ENCODE measurements at regions of chr9 and their contacts with region 1.

Region 1: DNA sequence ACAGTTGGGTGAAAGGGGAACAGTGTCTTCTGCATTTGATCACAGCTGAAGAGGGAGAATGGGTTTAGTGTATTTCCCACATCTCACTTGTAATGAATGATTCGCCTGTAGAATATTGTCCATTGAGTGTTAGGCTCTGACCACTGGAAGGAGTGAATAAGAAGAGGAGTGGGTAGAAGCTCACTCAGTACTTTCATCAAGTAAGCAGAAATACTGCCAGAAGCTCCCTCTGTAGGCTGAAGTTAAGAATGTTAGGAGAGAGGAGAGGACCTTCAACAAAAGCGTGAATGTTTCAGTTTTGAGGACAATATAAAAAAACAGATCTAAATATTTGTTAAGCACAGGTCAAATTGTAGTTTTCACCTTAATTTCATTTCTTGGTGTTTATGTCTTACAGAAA is 27.5 kb downstream of the FSD1L start:
- DNase-seq: no peak
- H3K4me3 ChIP-seq: no peak overlapping the region
- H3K27ac ChIP-seq: no peak overlapping the region
- H3K4me1 ChIP-seq: no peaks in the 10 kb centered on the region
- H3K27me3 ChIP-seq: no peaks in the 10 kb centered on the region
- CTCF ChIP-seq: peak in 1 of 3 experiments; percentile 30

Region 2: DNA sequence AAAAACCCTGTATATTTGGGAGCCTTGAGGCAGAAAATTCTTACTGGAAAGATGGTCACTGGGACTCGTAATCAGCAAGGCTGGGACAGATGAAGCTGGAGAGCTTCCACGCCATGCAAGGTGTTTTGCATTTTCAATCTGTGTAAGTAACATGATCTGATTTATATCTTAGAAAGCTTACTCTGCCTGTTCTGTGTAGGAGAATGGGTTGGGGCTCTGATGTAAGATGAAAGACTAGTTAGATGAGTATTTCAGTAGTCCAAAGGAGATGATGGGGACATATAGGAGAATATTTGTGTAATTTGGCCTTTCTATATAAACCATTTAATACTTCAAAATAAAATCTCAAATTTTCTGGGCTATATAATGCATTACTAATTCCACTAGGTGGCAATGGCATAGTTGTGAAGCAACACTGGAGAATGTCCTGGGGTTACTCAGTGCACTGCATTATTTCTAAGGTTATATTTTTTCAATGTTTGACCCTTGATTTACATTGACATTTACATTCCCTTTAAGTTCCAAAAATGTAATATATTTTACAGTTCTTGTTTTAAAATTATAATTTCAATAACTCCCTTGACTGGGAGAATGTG is 49.4 kb before region 1 on chr9:
- intact Hi-C with region 1: loop called (anchors 5 kb)
- DNase-seq: no peak
- H3K4me3 ChIP-seq: no peak overlapping the region
- H3K27ac ChIP-seq: no peak overlapping the region
- H3K4me1 ChIP-seq: no peaks in the 10 kb centered on the region
- H3K27me3 ChIP-seq: no peaks in the 10 kb centered on the region
- CTCF ChIP-seq: peak in 2 of 3 experiments; percentile 15 to 42

Region 3: DNA sequence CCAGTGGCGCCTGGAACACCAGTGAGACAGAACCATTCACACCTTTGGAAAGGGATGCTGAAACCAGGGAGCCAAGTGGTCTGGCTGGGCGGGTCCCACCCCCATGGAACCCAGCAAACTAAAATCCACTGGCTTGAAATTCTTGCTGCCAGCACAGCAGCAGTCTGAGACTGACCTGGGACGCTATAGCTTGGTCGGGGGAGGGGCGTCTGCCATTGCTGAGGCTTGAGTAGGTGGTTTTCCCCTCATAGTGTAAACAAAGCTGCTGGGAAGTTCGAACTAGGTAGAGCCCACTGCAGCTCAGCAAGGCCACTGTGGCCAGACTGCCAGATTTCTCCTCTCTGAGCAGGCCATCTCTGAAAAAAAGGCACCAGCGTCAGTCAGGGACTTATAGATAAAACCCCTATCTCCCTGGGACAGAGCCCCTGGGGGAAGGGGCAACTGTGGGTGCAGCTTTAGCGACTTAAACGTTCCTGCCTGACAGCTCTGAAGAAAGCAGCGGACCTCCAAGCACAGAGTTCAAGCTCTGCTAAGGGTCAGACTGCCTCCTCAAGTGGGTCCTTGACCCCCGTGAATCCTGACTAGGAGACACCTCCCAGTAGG is 40.6 kb after region 1 on chr9:
- intact Hi-C with region 1: no loop called
- DNase-seq: no peak
- H3K4me3 ChIP-seq: no peak overlapping the region
- H3K27ac ChIP-seq: no peak overlapping the region
- H3K4me1 ChIP-seq: no peaks in the 10 kb centered on the region
- H3K27me3 ChIP-seq: no peaks in the 10 kb centered on the region
- CTCF ChIP-seq: no peak

Region 4: DNA sequence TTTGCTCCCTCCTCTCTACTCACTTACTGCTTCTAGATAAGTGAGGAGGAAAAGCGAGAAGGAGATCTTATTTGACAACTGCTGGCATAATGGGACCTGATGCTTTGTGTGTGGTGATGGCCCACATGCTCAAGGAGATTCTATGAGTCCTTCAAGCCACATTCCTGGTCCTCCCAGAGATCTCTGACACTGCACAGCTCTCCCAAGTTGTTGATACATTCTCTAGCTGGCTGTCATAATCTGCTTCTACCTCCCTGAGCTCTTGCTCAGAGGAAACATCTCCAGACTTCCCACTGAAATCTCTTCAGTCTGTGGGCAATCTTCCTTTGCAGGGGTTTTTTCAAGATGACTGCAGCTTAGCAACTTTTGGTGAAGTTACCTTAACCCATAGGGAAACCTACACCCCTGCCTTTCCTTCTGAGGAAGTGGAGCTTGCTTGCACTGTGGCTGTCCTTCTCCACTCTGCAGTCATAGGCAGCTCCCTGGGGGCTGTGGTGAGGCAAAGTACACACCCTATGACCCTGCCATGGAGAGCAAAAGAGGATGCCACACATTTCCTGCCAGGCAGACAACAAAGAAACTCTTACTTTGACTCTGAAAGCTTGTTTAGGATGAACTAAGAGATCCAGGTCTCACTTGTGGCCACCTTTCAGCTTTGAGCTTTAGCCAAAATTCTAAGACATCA is 382.8 kb after region 1 on chr9:
- intact Hi-C with region 1: no loop called
- DNase-seq: no peak
- H3K4me3 ChIP-seq: no peak overlapping the region
- H3K27ac ChIP-seq: no peak overlapping the region
- H3K4me1 ChIP-seq: no peaks in the 10 kb centered on the region
- H3K27me3 ChIP-seq: no peaks in the 10 kb centered on the region
- CTCF ChIP-seq: no peak

Region 5: DNA sequence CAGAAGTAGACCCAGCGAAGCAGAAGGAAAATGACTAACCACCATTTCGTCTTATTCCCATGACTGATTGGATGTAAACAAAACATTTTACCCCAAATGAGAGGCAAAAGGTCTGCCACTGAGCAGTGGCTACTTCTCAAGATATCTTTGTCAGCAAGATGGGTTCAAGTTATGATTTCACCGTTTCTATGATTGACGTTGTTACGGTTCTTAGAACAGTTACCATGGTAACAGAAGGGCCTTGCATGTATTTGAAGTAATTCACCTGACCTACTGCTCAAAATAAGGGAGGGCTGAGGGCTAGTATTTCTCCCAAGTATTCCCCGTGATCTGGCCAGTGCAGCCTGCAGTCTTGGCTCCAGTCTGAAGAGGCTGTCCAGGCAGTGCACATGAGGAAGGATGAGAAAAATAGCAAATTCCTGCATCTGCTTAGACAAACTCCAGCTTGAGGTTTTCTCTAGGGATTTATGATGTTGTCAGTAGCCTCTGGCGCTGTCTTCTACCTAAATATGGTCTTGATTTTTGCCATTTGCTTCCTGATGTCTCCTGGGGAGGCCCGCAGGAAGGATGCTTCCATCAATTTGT is 591.7 kb after region 1 on chr9:
- intact Hi-C with region 1: no loop called
- DNase-seq: no peak
- H3K4me3 ChIP-seq: no peak overlapping the region
- H3K27ac ChIP-seq: no peak overlapping the region
- H3K4me1 ChIP-seq: no peaks in the 10 kb centered on the region
- H3K27me3 ChIP-seq: no peaks in the 10 kb centered on the region
- CTCF ChIP-seq: no peak

Measured in ascending aorta (tissue), 2 donors.